ENCODE measurements at regions of chr18 and their contacts with region 1.

Region 1: DNA sequence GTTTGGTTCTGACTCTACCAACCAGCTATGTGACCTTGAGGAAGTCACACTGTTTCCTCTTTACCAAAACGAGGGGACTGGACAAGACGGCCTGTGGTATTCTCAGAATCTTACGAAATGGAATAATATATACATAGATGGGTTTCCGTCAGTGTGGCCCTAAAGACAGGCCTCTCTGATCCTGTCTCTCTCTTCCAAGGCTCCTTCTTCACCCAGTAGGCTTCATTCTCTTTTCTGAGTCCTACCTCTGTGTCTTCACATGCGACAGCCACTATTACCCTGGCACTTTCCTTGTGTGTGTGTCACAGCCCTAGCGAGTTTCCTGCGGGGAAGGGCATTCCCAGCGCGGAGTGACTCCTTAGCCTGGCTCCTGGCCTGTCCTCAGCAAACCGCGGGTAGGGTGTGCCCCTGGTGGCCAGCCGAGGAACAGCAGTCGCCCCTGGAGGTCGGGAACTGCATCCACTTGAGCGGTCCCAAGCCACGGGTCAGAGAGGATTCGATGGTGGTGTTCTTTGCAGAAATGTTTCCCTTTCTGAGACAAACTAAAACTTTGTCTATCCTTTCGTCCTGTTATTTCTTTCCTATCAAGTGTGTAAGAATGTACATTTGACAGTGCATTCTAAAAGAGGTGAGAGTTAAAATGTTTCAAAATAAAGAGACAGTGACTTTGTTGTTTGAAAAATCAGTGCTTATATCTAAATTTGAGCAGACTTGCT is 63.3 kb downstream of the RAB31 start:
- DNase-seq: peak; percentile 88 to 89
- ATAC-seq: peak; percentile 90 to 98 (median 95)
- H3K4me3 ChIP-seq: peak overlapping the region in 1 of 10 donors; percentile 27
- H3K27ac ChIP-seq: peak overlapping the region in 4 of 10 donors; percentile 18 to 86 (median 28)
- H3K4me1 ChIP-seq: peaks cover 0 to 86% (median 8%) of the 10 kb centered on the region in 9 donors
- H3K27me3 ChIP-seq: no peaks in the 10 kb centered on the region
- CTCF ChIP-seq: peak; percentile 92 to 99 (median 99)

Region 2: DNA sequence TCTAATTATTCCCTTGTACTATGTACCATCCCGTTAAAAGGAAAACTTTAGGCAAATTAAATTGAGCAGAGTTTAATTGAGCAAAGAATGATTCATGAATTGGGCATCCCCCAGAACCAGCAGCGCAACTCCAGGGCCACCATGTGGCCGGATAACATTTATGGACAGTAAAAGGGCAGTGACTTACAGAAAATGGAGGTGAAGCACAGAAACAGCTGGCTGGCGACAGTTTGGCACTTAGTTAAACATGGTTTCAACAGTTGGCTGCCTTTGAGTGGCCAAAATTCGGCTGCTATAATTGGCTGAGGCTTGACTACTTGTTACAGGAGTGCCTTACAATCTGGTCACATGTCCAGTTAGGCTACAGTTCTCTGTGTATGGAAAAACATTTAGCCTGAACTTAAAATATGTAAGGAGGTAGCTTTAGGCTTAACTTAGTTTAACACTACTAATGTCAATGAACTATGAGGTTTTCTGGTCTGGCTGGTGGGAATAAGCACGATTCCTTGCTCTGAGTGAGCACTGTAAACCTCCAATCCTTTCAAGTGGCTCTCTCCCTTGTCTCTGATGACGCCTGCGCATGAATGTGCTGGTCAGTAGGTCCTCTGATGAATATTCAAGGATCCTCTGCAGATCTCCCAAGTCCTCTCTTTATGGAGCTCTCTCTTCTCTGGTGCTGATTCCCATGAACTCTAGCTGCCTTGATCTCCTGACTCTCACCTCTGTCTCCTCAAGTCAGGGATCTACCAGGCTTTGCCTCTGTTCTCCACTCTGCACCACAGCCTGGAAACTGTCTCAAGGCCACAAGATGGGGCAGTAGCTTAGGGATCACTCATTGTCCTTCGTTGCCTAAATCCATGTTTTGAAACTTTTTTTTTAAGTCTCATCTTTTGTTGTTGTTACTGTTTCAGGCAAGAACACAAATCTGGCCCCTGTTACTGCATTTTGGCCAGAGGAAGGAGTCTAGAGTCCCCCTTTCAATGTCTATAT is 87.7 kb before region 1 on chr18:
- intact Hi-C with region 1: loop called in 6 of 10 experiments (anchors 2 to 10 kb)
- DNase-seq: peak in 1 of 2 donors; percentile 29
- ATAC-seq: peak; percentile 44 to 87 (median 70)
- H3K4me3 ChIP-seq: no peak overlapping the region
- H3K27ac ChIP-seq: peak overlapping the region in 8 of 10 donors; percentile 46 to 82 (median 70)
- H3K4me1 ChIP-seq: peaks cover 0 to 36% (median 22%) of the 10 kb centered on the region in 9 donors
- H3K27me3 ChIP-seq: no peaks in the 10 kb centered on the region
- CTCF ChIP-seq: peak in 7 of 9 donors; percentile 16 to 60 (median 52)

Region 3: GRCh38 chr18:9838144-9838877 is 66.9 kb after region 1 on chr18:
- intact Hi-C with region 1: no loop called
- DNase-seq: peak; percentile 37 to 55
- ATAC-seq: peak; percentile 73 to 95 (median 84)
- H3K4me3 ChIP-seq: no peak overlapping the region
- H3K27ac ChIP-seq: peak overlapping the region; percentile 43 to 84 (median 70)
- H3K4me1 ChIP-seq: peaks cover 3 to 47% (median 18%) of the 10 kb centered on the region in 9 donors
- H3K27me3 ChIP-seq: no peaks in the 10 kb centered on the region
- CTCF ChIP-seq: no peak

Region 4: DNA sequence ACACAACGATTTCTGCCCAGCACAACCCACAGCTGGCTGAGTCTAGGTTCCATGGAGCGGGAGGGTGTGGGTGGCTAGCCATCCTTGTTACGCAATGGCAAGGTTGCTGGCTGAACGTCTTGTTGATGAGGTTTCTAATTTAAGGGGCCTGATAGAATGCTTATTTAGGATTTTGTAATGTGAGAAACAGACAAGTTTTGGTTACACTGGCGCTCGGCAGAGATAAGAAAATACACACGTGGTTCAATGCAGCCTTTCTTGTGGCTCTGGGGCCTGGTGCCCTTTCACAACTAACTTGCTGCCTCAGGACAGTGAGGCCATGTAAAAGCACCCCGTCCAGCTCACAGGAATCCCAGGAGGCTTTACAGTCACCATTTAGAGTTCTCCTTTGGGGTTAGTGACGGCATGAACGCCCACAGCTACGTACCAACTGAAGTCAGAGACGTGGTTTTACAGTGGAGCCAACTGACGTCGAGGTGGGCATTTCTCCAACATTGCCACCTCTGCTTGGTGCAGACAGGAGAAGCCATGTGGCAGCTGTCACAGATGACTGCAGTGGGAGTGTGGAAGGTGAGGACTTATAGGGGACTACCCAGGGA is 1407.6 kb after region 1 on chr18:
- intact Hi-C with region 1: no loop called
- DNase-seq: peak; percentile 20 to 42
- ATAC-seq: peak; percentile 51 to 88 (median 66)
- H3K4me3 ChIP-seq: no peak overlapping the region
- H3K27ac ChIP-seq: peak overlapping the region in 1 of 10 donors; percentile 35
- H3K4me1 ChIP-seq: peaks cover 0 to 9% (median 0%) of the 10 kb centered on the region in 9 donors
- H3K27me3 ChIP-seq: no peaks in the 10 kb centered on the region
- CTCF ChIP-seq: no peak

Measured in heart right ventricle (tissue), 16 donors.